ENCODE measurements at regions of chr13 and their contacts with region 1.

Region 1: DNA sequence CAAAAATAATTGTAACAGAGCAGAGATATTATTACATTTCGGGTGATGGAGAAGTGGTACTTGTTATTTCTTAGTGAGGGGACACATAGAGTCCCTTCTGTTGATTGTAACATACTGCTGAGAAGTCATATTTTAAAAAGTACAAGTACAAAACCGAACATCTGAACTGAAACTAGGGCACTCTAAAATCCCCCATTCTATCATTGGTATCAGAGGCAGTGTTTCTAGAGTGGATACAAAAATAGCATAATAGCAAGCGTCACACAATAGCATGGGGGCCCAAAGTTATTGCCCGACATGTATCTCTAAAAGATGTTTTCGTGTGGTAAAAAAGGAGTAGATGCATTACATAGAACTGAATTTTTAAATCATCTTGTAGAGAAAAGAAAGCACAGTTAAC is 502.1 kb upstream of the SLC10A2 start:
- DNase-seq: no peak
- H3K4me3 ChIP-seq: no peak overlapping the region
- H3K27ac ChIP-seq: no peak overlapping the region
- H3K4me1 ChIP-seq: no peaks in the 10 kb centered on the region
- H3K27me3 ChIP-seq: no peaks in the 10 kb centered on the region
- CTCF ChIP-seq: no peak
- POLR2A ChIP-seq: no peak

Region 2: GRCh38 chr13:103335241-103335640 is 233.1 kb before region 1 on chr13:
- intact Hi-C with region 1: no loop called
- DNase-seq: no peak
- H3K4me3 ChIP-seq: no peak overlapping the region
- H3K27ac ChIP-seq: no peak overlapping the region
- H3K4me1 ChIP-seq: no peaks in the 10 kb centered on the region
- H3K27me3 ChIP-seq: no peaks in the 10 kb centered on the region
- CTCF ChIP-seq: no peak
- POLR2A ChIP-seq: no peak

Region 3: DNA sequence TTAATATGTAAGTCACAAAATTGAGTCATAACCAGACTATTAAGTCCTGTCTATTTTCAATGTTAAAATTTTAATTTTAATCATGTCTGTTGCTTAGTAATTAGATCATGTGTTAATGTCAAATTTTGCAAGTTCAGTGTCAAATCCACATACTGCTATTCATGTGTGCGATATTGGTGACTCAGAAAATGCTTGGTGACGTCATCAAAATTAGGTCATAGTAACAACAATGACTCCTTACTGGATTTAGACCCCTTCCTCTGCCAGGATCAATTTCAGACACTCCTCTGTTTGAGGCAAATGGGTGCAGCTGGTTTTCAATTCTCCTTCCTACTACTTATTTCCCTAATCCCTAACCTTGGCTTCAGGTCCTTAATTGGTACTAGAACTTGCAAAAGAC is 892.2 kb after region 1 on chr13:
- intact Hi-C with region 1: loop called (anchors 10 kb)
- DNase-seq: no peak
- H3K4me3 ChIP-seq: no peak overlapping the region
- H3K27ac ChIP-seq: no peak overlapping the region
- H3K4me1 ChIP-seq: no peaks in the 10 kb centered on the region
- H3K27me3 ChIP-seq: no peaks in the 10 kb centered on the region
- CTCF ChIP-seq: no peak
- POLR2A ChIP-seq: no peak